ENCODE measurements at regions of chr20 and their contacts with region 1.

Region 1: GRCh38 chr20:58209652-58210397 is 18.6 kb downstream of the ANKRD60 start:
- DNase-seq: peak; percentile 80 to 93 (median 85)
- H3K4me3 ChIP-seq: no peak overlapping the region
- H3K27ac ChIP-seq: no peak overlapping the region
- H3K4me1 ChIP-seq: no peaks in the 10 kb centered on the region
- H3K27me3 ChIP-seq: no peaks in the 10 kb centered on the region
- CTCF ChIP-seq: peak; percentile 100

Region 2: DNA sequence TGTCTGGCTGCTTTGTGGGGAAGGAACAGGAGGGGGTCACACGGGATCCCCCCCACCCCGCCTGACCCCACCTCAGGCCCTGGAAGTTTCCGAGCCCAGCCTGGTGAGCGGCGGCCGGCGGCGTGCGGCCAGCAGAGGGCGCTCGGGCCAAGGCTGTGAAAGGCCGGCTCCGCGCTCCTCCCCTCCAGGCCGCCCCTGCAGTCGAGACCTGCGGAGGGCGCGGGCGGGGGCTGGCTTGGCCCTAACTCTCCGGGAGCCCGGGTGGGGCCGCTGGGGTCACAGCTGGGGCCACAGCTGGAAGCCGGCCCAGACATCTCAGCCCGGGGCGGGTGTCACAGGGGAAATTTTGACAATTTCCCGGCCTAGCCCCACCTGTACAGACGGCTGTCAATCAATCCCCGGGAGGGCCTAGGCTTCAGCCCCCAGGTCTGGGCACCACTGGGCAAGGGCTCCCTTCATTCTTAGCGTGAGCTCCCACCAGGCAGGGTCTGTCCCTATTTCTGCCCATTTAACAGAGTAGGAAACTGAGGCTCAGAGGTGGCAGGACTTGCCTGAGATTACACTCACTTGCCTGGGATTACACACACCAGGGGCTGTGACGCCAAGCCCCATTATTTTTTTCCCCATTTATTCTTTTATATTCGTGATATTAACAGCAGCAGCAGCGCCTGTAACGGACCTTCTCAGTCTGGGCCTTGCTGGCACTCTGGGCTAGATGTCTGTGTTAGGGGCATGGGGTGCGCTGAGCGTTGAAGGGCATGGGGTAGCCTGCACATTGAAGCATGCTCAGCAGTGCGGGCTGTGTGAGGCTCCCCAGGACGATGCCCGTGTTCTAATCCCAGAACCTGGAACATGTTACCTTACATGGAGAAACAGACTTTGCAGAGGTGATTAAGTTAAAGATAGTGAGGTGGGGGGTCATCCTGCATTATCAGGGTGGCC is 612.6 kb before region 1 on chr20:
- intact Hi-C with region 1: loop called (anchors 5 kb)
- DNase-seq: peak; percentile 52 to 89 (median 81)
- H3K4me3 ChIP-seq: no peak overlapping the region
- H3K27ac ChIP-seq: no peak overlapping the region
- H3K4me1 ChIP-seq: peaks cover 0 to 13% (median under 1%) of the 10 kb centered on the region in 3 donors
- H3K27me3 ChIP-seq: no peaks in the 10 kb centered on the region
- CTCF ChIP-seq: peak; percentile 98

Measured in kidney (tissue), 22 donors.